Activated CD4-positive, alpha-beta T cell treated with anti-CD3 and anti-CD28 coated beads, Interleukin-2, amount 10 ng/mL, durations not matched to agents 24 days and 14 days (primary cell): ENCODE measurements at regions of chr7 and their contacts with region 1.

Region 1: DNA sequence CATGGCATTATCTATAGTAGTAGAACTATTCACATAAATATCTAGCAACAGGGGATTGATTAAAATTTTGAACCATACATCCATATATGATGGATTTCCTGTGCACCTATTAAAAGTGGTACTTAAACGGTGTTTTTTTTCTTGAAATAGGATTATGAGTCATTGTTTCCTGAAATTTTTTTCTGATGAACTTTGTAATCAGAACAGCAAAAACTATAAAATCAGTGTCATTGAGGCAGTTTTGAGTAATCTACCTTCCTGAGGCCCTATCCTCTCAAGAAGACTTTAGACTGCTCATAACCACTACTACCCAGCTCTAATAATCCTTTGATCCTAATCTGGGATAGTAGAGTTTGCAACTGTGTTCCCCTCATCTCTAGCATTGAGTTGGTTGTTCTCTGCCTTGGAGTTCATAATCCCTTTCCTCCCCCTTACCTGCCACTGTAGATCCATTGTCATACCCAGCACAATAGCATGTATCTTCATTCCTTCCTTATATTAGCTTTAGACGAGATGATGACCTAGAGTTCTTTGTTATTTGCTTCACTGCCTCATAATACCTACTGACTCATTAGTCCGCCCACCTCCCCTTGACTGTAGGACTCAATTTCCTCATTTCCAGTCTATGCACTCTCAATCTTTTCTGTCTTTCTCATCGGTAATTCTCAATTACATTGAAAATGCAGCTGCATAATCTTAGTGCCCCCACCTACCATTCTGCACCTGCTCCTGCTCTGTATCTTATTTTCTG is 133.4 kb downstream of the LRRC4 start:
- DNase-seq: no peak
- H3K4me3 Mint-ChIP-seq: no peak overlapping the region
- H3K27ac Mint-ChIP-seq: no peak overlapping the region
- H3K4me1 Mint-ChIP-seq: peaks cover 32% of the 10 kb centered on the region
- H3K27me3 Mint-ChIP-seq: no peaks in the 10 kb centered on the region

Region 2: GRCh38 chr7:127717502-127718339 is 180.2 kb before region 1 on chr7:
- intact Hi-C with region 1: no loop called
- DNase-seq: no peak
- H3K4me3 Mint-ChIP-seq: no peak overlapping the region
- H3K27ac Mint-ChIP-seq: peak overlapping the region; percentile 55
- H3K4me1 Mint-ChIP-seq: peaks cover 28% of the 10 kb centered on the region
- H3K27me3 Mint-ChIP-seq: no peaks in the 10 kb centered on the region

Region 3: GRCh38 chr7:127751490-127752448 is 146.1 kb before region 1 on chr7:
- intact Hi-C with region 1: loop called (anchors 5 kb)
- DNase-seq: no peak
- H3K4me3 Mint-ChIP-seq: no peak overlapping the region
- H3K27ac Mint-ChIP-seq: peak overlapping the region; percentile 21
- H3K4me1 Mint-ChIP-seq: peaks cover 31% of the 10 kb centered on the region
- H3K27me3 Mint-ChIP-seq: no peaks in the 10 kb centered on the region

Region 4: GRCh38 chr7:127819975-127820731 is 77.7 kb before region 1 on chr7:
- intact Hi-C with region 1: loop called (anchors 2 kb)
- DNase-seq: no peak
- H3K4me3 Mint-ChIP-seq: peak overlapping the region; percentile 50
- H3K27ac Mint-ChIP-seq: peak overlapping the region; percentile 80
- H3K4me1 Mint-ChIP-seq: peaks cover 40% of the 10 kb centered on the region
- H3K27me3 Mint-ChIP-seq: no peaks in the 10 kb centered on the region

Region 5: DNA sequence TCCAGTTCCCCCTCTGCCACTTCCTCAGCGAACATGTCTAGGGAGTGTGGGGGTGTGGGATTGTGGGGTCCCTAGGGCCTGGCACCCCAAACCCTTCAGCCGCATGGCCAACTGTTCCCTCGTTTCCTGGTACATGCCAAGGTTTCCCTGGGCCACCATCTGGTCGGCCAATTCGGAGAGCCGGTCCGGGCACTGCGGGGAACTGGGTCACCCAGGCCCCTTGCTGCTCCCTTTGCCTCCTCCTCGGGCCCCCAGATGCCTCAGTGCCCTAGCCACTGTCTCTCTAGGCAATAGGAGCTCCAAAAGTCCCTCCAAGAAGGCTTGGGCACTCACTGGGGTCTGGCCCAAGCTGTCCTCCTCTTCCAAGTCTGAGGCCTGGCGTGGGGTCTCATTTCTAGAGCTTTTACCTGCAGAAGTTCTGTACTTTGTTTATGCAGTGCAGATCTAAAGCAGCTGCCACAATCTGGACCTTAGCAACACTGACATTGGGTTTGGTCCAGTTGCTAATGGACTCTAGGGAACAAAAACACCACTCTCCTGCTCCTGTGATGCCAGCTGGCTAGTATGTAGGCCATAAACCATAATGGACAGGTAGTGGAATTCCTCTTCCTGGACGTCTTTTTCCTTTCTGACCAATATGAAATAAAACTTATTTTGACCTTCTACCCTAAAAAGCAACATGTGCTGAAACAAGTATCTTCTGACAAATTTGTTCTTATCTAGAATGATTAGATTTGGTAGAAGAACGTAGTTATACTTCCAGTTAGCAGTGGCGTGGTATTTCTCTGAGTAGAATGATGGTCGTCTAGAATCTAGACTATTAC is 39.6 kb before region 1 on chr7:
- intact Hi-C with region 1: loop called (anchors 1 kb)
- DNase-seq: peak; percentile 58
- H3K4me3 Mint-ChIP-seq: no peak overlapping the region
- H3K27ac Mint-ChIP-seq: peak overlapping the region; percentile 68
- H3K4me1 Mint-ChIP-seq: peaks cover 50% of the 10 kb centered on the region
- H3K27me3 Mint-ChIP-seq: peaks cover 2% of the 10 kb centered on the region

Region 6: DNA sequence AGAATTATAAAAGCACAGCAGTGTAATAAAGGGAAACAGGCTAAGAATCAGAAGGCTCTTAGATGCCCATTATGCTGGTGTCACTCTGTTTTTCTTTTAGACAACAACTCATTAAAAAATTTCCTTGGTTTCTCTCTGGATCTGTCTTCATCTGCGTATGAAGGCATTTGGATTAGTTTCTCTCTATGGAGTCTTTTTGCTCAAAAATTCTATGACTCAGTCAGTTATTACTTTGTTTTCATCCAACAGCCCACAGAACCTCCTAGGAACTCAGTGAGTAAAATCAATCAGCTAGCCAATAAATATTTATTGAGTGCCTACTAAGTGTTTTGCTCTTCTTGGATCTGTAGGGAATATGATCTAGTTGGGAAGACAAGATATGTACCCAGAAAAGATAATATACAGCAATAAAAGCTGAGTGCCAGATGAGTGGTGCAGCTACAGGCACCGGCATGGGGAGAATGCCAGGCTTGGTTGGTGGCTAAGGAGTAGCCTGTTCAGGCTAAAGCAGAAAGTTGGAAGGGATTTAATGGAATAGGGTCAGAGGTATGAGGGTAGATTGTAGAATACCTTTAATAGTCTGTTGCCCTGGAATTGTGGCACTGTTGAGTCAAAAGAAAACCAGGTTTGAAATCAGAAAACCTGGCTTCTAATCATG is 22.8 kb before region 1 on chr7:
- intact Hi-C with region 1: loop called (anchors 1 kb)
- DNase-seq: no peak
- H3K4me3 Mint-ChIP-seq: no peak overlapping the region
- H3K27ac Mint-ChIP-seq: peak overlapping the region; percentile 50
- H3K4me1 Mint-ChIP-seq: peaks cover 25% of the 10 kb centered on the region
- H3K27me3 Mint-ChIP-seq: no peaks in the 10 kb centered on the region

Region 7: DNA sequence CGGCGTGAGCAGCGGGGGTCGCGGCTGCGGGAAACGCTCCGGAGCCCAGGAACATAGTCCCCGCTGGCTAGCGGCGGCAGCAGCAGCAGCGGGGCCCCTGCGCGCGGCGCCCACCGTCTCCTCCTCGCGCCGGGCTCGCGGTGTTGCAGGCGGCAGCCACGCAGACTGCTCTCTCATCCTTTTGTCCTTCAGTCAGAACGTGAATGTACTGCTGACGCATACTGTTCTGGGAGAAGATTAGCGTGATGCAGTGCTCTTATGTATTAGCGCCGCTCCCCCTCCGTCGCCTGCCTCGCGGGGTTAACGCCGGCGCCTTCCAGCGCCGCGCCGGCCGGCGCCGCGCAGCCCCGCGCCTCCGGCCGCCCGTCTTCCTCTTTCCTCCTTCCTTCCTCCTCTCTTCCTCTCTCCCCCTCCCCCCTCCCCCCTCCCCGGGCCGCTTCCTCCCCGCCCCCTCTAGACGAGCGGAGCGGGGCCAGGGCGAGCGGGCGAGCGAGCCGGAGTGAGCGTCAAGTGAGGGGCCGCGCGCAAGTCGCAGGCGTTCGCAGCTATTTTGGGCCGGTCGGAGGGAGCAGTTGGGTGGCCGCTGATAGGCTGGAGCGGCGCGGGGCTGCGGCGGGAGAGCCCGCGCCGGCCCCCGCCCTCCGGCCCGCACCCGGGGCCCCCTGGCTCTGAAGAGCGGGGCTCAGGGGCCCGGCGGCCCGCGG is 134.2 kb after region 1 on chr7:
- intact Hi-C with region 1: loop called (anchors 1 kb)
- DNase-seq: peak; percentile 80
- H3K4me3 Mint-ChIP-seq: peak overlapping the region; percentile 82
- H3K27ac Mint-ChIP-seq: peak overlapping the region; percentile 65
- H3K4me1 Mint-ChIP-seq: peaks cover 7% of the 10 kb centered on the region
- H3K27me3 Mint-ChIP-seq: peaks cover 22% of the 10 kb centered on the region